K562 (cell line): ENCODE measurements at regions of chr9 and their contacts with region 1.

Region 1: DNA sequence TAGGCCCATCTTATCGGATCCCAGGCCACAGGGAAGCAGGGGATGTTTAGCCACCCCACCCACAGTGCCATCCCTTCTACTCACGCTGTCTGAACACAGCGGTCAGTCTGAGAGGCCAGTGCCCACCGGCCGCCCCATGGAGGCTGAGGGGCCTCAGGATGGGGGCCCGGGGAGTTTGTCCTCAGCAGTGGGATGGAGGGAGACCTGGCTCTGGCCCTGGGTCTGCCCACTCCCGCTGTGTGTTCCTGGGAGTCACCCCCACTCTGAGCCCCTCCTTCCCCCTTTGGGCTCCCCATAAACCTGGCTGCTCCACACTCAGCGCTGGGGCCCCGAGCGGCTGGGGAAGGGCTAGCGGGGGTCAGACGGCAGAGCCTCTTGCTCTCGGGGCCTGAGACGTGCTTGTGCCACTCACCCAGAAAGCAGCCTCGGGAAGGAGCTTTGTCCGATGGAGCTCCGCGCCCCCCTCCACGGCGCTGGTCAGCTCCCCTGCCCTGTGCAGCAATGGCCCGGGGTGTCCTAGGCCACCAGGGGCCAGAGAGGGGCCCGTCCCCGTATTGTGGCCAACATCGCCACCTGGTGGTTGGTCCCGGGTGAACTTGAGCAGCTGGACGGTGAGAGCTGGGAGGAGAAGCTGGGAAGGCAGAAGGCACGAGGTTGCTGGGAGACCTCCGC is 10.9 kb upstream of the LAMC3 start:
- DNase-seq: peak; percentile 66 to 100 (median 100)
- ATAC-seq: peak; percentile 94
- H3K4me3 ChIP-seq: no peak overlapping the region
- H3K27ac ChIP-seq: no peak overlapping the region
- H3K4me1 ChIP-seq: peaks cover 0 to 24% of the 10 kb centered on the region in 2 experiments; a peak in 3 of 5 replicates
- H3K27me3 ChIP-seq: peaks cover 71 to 97% of the 10 kb centered on the region in 2 experiments
- CTCF ChIP-seq: no peak
- EP300 ChIP-seq: no peak
- POLR2A ChIP-seq: no peak
- RAD21 ChIP-seq: no peak

Region 2: GRCh38 chr9:130712564-130713285 is 285.3 kb before region 1 on chr9:
- CTCF ChIA-PET with region 1: interaction called, 9 read pairs
- POLR2A ChIA-PET with region 1: no interaction called
- in situ Hi-C with region 1: loop called (anchors 25 kb)
- intact Hi-C with region 1: no loop called
- DNase-seq: peak; percentile 96 to 99 (median 98)
- ATAC-seq: peak; percentile 98
- H3K4me3 ChIP-seq: peak overlapping the region; percentile 98
- H3K27ac ChIP-seq: peak overlapping the region; percentile 99
- H3K4me1 ChIP-seq: peaks cover 7 to 19% of the 10 kb centered on the region in 2 experiments; a peak in 3 of 5 replicates
- H3K27me3 ChIP-seq: no peaks in the 10 kb centered on the region
- CTCF ChIP-seq: no peak
- EP300 ChIP-seq: no peak
- POLR2A ChIP-seq: peak; percentile 81
- RAD21 ChIP-seq: no peak

Region 3: DNA sequence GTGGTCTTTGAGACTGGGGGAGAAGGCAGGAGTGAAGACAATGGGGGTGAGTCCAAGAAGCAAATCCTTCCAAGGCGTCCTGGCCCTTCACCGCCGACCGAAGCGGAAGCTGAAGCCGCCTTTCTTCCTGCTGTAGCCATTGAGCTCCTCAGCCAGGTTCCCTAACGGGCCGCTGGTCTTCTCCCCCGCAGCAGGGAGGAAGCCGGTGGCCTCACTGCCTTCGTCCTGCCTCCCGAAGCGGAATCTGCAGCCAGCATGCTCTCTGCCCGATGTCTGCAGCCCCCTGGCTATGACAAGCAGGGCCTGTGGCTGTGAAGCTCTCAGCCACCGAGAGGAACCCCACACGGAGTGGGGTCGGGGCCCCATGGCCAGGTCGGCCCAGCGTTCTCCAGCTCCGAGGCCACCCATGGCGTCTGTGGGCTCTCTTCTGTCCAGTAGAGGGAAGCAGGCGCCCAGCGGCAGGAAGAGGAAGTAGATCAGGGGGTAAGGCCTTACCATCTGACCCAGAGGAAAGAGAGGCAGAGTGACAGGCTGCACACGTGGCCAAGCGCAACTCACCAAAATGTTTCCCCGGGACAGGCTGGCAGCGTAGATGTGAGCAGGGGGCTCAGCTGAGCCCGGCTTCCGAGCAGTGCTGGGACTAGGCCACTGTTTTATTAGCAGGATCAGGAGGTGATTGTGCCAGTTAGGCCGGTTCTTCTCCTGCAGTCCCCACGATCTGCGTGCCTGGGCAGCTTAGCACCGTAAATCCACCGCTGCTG is 104.5 kb before region 1 on chr9:
- CTCF ChIA-PET with region 1: no interaction called
- POLR2A ChIA-PET with region 1: interaction called, 6 read pairs
- in situ Hi-C with region 1: no loop called
- intact Hi-C with region 1: loop called (anchors 1 kb)
- DNase-seq: peak; percentile 58 to 90 (median 72)
- ATAC-seq: peak; percentile 73
- H3K4me3 ChIP-seq: no peak overlapping the region
- H3K27ac ChIP-seq: no peak overlapping the region
- H3K4me1 ChIP-seq: peaks cover 6 to 56% of the 10 kb centered on the region in 2 experiments; a peak in 4 of 5 replicates
- H3K27me3 ChIP-seq: peaks cover 23 to 33% of the 10 kb centered on the region in 2 experiments; a peak in 4 of 5 replicates
- CTCF ChIP-seq: no peak
- EP300 ChIP-seq: no peak
- POLR2A ChIP-seq: no peak
- RAD21 ChIP-seq: no peak

Region 4: GRCh38 chr9:130981756-130982137 is 16.3 kb before region 1 on chr9:
- CTCF ChIA-PET with region 1: interaction called, 5 read pairs
- POLR2A ChIA-PET with region 1: interaction called, 131 read pairs
- in situ Hi-C with region 1: no loop called
- intact Hi-C with region 1: no loop called
- DNase-seq: peak in 2 of 4 experiments; percentile 29 to 68
- ATAC-seq: no peak
- H3K4me3 ChIP-seq: no peak overlapping the region
- H3K27ac ChIP-seq: no peak overlapping the region
- H3K4me1 ChIP-seq: peaks cover 0 to 25% of the 10 kb centered on the region in 2 experiments; a peak in 1 of 5 replicates
- H3K27me3 ChIP-seq: peaks cover 91 to 98% of the 10 kb centered on the region in 2 experiments
- CTCF ChIP-seq: no peak
- EP300 ChIP-seq: no peak
- POLR2A ChIP-seq: no peak
- RAD21 ChIP-seq: no peak

Region 5: DNA sequence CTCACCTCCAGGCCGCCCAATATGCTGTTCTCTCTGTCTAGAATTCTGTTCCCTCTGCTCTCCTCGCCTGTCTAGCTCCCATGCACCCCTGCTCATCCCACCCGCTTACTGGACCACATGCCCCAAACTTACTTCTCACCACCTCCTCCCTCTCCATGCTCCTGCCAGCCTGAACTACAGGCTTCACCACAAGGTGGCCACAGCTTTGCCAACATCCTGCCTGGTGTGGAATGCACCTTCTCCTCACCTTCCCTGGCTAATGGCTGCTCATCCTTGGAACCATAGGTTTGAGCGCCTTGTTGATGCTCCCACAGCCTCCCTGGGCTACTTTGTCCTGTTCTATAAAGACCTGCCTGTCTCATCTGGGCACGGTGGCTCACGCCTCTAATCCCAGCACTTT is 20.6 kb after region 1 on chr9:
- CTCF ChIA-PET with region 1: no interaction called
- POLR2A ChIA-PET with region 1: interaction called, 103 read pairs
- in situ Hi-C with region 1: no loop called
- intact Hi-C with region 1: no loop called
- DNase-seq: peak in 1 of 4 experiments; percentile 75
- ATAC-seq: peak; percentile 26
- H3K4me3 ChIP-seq: no peak overlapping the region
- H3K27ac ChIP-seq: no peak overlapping the region
- H3K4me1 ChIP-seq: peaks cover 0 to 14% of the 10 kb centered on the region in 2 experiments; a peak in 1 of 5 replicates
- H3K27me3 ChIP-seq: peaks cover 85 to 95% of the 10 kb centered on the region in 2 experiments
- CTCF ChIP-seq: no peak
- EP300 ChIP-seq: no peak
- POLR2A ChIP-seq: no peak
- RAD21 ChIP-seq: no peak